Activated CD4-positive, alpha-beta T cell treated with anti-CD3 and anti-CD28 coated beads for 36 hours (primary cell): ENCODE measurements at regions of chr17 and their contacts with region 1.

Region 1: GRCh38 chr17:32519228-32520103 is 32.7 kb downstream of the CDK5R1 start:
- DNase-seq: peak; percentile 82
- ATAC-seq: peak; percentile 5
- H3K4me3 Mint-ChIP-seq: peak overlapping the region; percentile 70
- H3K27ac Mint-ChIP-seq: peak overlapping the region; percentile 92
- H3K4me1 Mint-ChIP-seq: peaks cover 89% of the 10 kb centered on the region
- H3K27me3 Mint-ChIP-seq: no peaks in the 10 kb centered on the region

Region 2: DNA sequence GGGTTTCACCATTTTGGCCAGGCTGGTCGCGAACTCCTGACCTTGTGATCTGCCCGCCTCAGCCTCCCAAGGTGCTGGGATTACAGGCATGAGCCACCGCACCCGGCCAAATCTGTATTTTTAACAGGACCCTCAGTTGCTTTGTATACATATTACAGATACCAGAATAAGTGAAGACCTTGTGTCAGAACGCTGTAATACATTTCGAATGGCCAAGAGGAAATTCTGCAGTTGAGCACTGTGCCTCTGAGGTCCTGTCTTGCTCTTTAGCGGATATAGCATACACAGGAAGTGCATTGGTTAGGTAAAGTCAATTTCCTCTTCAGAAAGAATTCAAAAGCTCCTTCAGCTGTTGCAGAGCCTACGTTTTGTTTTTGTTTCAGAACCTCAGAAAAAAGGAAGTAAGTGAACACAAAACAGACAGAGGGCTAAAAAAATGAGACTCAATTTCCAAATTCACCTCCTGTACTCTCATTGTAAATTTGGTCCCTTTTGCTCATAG is 1710.6 kb before region 1 on chr17:
- CTCF ChIA-PET with region 1: no interaction called
- POLR2A ChIA-PET with region 1: no interaction called
- intact Hi-C with region 1: loop called in 1 of 2 experiments (anchors 5 kb)
- DNase-seq: peak; percentile 49
- ATAC-seq: peak; percentile 79
- H3K4me3 Mint-ChIP-seq: peak overlapping the region; percentile 76
- H3K27ac Mint-ChIP-seq: peak overlapping the region; percentile 97
- H3K4me1 Mint-ChIP-seq: peaks cover 71% of the 10 kb centered on the region
- H3K27me3 Mint-ChIP-seq: no peaks in the 10 kb centered on the region

Region 3: GRCh38 chr17:32349854-32350665 is 169.4 kb before region 1 on chr17 and contains the start of gene ZNF207:
- CTCF ChIA-PET with region 1: no interaction called
- POLR2A ChIA-PET with region 1: no interaction called
- intact Hi-C with region 1: loop called in 1 of 2 experiments (anchors 1 kb)
- DNase-seq: peak; percentile 98
- ATAC-seq: peak; percentile 97
- H3K4me3 Mint-ChIP-seq: peak within 1 kb of the TSS; percentile 99
- H3K27ac Mint-ChIP-seq: peak within 1 kb of the TSS; percentile 100
- H3K4me1 Mint-ChIP-seq: peaks cover 28% of the 10 kb centered on the region
- H3K27me3 Mint-ChIP-seq: no peaks in the 10 kb centered on the region
- total RNA-seq, gene ZNF207: 197 to 231 TPM

Region 4: DNA sequence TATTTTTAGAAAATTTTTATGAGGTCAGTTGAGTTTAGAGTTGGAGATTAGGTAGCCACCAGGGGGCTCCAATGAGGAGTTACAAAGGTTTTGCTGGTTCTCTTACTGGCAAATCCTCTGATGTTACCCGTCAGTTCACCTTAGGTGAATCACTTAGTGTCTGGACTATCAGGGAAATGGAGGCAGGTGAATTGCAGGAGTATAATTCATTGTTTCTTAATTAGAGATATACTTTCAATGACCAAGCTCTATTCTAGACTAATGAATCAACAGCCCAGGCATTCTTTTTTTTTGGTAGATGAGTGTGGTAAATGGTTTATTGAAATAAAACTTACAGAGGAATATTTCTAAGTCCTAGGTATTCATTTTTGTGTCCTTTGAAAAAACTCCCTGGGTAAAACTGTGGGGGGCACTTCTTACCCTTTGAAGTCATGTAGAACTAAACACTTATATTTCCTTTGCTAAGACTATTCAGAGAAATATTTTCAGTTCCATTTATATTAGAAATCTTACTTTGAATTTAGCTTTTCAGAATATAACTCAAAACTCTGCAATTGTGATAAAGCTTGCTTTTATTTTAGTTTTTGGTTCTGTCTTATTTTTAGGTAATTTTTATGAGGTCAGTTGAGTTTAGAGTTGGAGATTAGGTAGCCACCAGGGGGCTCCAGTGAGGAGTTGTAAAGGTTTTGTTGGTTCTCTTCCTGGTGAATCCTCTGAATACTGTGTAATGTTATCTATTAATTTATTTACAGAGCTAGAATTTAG is 57.4 kb before region 1 on chr17:
- CTCF ChIA-PET with region 1: interaction called, 8 read pairs
- POLR2A ChIA-PET with region 1: no interaction called
- intact Hi-C with region 1: loop called in 1 of 2 experiments (anchors 2 kb)
- DNase-seq: peak; percentile 83
- ATAC-seq: peak; percentile 79
- H3K4me3 Mint-ChIP-seq: no peak overlapping the region
- H3K27ac Mint-ChIP-seq: peak overlapping the region; percentile 56
- H3K4me1 Mint-ChIP-seq: peaks cover 33% of the 10 kb centered on the region
- H3K27me3 Mint-ChIP-seq: no peaks in the 10 kb centered on the region

Region 5: GRCh38 chr17:32503251-32504165 is 16.0 kb before region 1 on chr17:
- CTCF ChIA-PET with region 1: interaction called, 5 read pairs
- POLR2A ChIA-PET with region 1: interaction called, 19 read pairs
- intact Hi-C with region 1: loop called (anchors 1 kb)
- DNase-seq: peak; percentile 71
- ATAC-seq: peak; percentile 93
- H3K4me3 Mint-ChIP-seq: peak overlapping the region; percentile 46
- H3K27ac Mint-ChIP-seq: peak overlapping the region; percentile 97
- H3K4me1 Mint-ChIP-seq: peaks cover 73% of the 10 kb centered on the region
- H3K27me3 Mint-ChIP-seq: no peaks in the 10 kb centered on the region

Region 6: DNA sequence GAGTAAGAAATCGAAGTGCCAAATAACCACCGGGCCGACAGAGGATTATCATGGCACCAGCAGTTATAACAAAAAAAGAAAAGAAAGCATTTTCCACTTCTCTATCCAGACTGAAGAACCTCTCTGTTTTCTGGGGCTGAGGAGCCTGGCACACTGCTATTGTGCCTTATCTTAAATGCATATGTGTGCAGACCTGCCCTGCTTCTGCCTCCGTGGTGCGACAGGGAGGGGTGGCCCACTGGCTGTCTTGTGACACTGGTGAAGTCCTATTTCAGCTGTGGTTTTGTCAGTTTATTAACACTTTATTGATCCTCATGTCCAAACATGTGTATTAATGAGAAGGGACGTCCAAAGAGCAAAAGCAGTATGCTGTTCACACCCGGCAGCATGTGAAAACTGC is 22.7 kb after region 1 on chr17:
- CTCF ChIA-PET with region 1: no interaction called
- POLR2A ChIA-PET with region 1: no interaction called
- intact Hi-C with region 1: no loop called
- DNase-seq: no peak
- ATAC-seq: no peak
- H3K4me3 Mint-ChIP-seq: no peak overlapping the region
- H3K27ac Mint-ChIP-seq: no peak overlapping the region
- H3K4me1 Mint-ChIP-seq: peaks cover 2% of the 10 kb centered on the region
- H3K27me3 Mint-ChIP-seq: no peaks in the 10 kb centered on the region

Region 7: GRCh38 chr17:32564325-32564724 is 44.9 kb after region 1 on chr17:
- CTCF ChIA-PET with region 1: no interaction called
- POLR2A ChIA-PET with region 1: interaction called, 5 read pairs
- intact Hi-C with region 1: loop called in 1 of 2 experiments (anchors 1 kb)
- DNase-seq: peak; percentile 50
- ATAC-seq: peak; percentile 93
- H3K4me3 Mint-ChIP-seq: no peak overlapping the region
- H3K27ac Mint-ChIP-seq: peak overlapping the region; percentile 44
- H3K4me1 Mint-ChIP-seq: peaks cover 20% of the 10 kb centered on the region
- H3K27me3 Mint-ChIP-seq: no peaks in the 10 kb centered on the region